ENCODE measurements at regions of chr12 and their contacts with region 1.

Region 1: GRCh38 chr12:49740930-49741881 is at the start of gene TMBIM6:
- DNase-seq: peak; percentile 100
- ATAC-seq: peak; percentile 95
- H3K4me3 ChIP-seq: peak within 1 kb of the TSS; percentile 64 to 94 (median 79)
- H3K27ac ChIP-seq: peak within 1 kb of the TSS; percentile 95
- H3K4me1 ChIP-seq: peaks cover 43% of the 10 kb centered on the region
- H3K27me3 ChIP-seq: no peaks in the 10 kb centered on the region; a peak in 1 of 5 replicates
- CTCF ChIP-seq: peak; percentile 96
- EP300 ChIP-seq: peak in 1 of 2 experiments; percentile 62; a peak in 1 of 4 replicates
- POLR2A ChIP-seq: peak; percentile 99 to 100
- RAD21 ChIP-seq: peak; percentile 74
- total RNA-seq, gene TMBIM6: 220 and 412 TPM in 2 replicates

Region 2: DNA sequence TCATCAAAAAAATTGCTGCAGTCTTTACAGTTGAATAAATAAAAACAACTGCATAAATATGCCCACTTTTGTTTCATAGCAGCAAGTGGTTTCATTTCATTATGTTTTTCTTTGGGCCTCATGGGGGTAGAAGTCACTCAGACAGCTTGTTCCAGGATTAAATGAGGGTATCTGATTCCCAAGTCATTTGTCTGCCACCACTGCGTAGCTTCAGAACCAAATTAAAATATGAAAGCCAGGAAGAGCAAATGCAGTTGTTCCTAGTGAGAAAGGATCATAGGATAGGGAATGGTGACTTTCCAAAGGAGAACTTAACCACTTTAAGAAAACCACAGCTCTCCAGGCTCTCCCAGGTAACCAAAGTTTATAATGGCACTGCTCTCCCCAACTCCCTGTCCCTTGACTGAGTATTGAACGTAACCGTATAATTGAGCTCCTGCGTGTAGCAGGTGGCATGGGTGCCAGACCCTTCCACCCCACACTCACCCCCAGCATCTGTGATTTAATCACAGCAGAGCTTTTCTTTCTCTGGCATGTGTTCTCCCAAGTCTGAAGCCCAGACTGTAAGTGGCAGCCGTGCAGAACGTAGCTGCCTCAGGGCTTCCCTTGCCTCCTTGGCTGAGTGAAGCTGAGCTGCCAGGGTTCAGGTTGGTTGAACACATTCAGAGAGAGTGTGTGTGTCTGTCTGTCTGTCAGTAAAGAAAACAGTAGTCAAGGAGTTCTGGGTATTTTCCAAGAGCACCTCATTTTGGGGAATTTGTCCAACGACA is 213.7 kb before region 1 on chr12:
- CTCF ChIA-PET with region 1: no interaction called
- POLR2A ChIA-PET with region 1: no interaction called
- in situ Hi-C with region 1: no loop called
- intact Hi-C with region 1: no loop called
- DNase-seq: no peak
- ATAC-seq: no peak
- H3K4me3 ChIP-seq: no peak overlapping the region
- H3K27ac ChIP-seq: no peak overlapping the region
- H3K4me1 ChIP-seq: no peaks in the 10 kb centered on the region
- H3K27me3 ChIP-seq: no peaks in the 10 kb centered on the region
- CTCF ChIP-seq: no peak
- EP300 ChIP-seq: no peak
- POLR2A ChIP-seq: no peak
- RAD21 ChIP-seq: no peak

Region 3: DNA sequence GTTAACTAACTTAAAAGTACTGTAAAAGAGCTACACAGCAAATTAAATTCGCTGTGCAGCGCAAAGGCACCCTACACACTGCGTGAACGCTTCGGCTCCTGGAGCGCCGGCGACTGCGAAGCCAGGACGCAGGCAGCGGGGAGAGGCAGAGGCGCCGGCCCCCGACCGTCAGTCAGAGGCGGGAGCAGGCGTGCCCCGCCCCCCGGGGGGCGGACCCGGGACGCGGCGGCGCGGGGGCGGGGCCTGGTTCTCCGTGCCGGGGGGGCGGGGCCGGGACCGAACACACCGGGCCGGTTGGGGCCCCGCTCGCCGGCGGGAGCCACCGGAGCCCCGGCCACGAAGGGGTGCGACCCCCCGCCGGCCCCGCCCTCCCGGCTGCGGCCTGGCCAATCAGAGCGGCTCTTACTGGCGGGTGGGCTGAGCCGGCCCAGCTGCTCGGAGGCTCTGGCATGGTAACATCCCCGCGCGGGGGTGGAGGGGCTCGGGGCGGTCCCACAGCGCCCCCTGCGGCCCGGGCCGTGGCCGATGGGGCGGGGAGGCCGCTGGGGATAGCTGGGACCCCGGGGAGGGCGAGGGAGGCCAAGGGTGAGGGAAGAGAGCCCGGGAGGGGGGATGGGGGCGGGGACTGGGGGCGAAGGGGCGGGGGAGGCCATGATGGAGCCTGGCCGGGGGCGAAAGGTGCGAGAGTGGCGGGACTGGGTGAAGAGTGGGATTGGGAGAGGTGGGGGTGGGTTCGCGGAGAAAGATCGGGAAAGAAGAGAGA is 117.9 kb before region 1 on chr12 and contains the start of gene PRPF40B:
- CTCF ChIA-PET with region 1: no interaction called
- POLR2A ChIA-PET with region 1: interaction called, 10 read pairs
- in situ Hi-C with region 1: no loop called
- intact Hi-C with region 1: no loop called
- DNase-seq: peak; percentile 77
- ATAC-seq: peak; percentile 90
- H3K4me3 ChIP-seq: peak within 1 kb of the TSS; percentile 56 to 75 (median 59)
- H3K27ac ChIP-seq: peak within 1 kb of the TSS; percentile 67
- H3K4me1 ChIP-seq: peaks cover 29% of the 10 kb centered on the region
- H3K27me3 ChIP-seq: no peaks in the 10 kb centered on the region
- CTCF ChIP-seq: peak; percentile 78
- EP300 ChIP-seq: no peak
- POLR2A ChIP-seq: peak; percentile 90 to 92
- RAD21 ChIP-seq: no peak
- total RNA-seq, gene PRPF40B: 2.6 and 5.0 TPM in 2 replicates

Region 4: GRCh38 chr12:49673446-49674317 is 67.5 kb before region 1 on chr12:
- CTCF ChIA-PET with region 1: no interaction called
- POLR2A ChIA-PET with region 1: interaction called, 15 read pairs
- in situ Hi-C with region 1: no loop called
- intact Hi-C with region 1: no loop called
- DNase-seq: peak; percentile 47
- ATAC-seq: peak; percentile 97
- H3K4me3 ChIP-seq: peak overlapping the region; percentile 24 to 53 (median 31); a peak in 4 of 6 replicates
- H3K27ac ChIP-seq: no peak overlapping the region
- H3K4me1 ChIP-seq: peaks cover 24% of the 10 kb centered on the region
- H3K27me3 ChIP-seq: no peaks in the 10 kb centered on the region; a peak in 1 of 5 replicates
- CTCF ChIP-seq: no peak
- EP300 ChIP-seq: no peak
- POLR2A ChIP-seq: no peak
- RAD21 ChIP-seq: no peak

Region 5: GRCh38 chr12:49720214-49720613 is 21.0 kb before region 1 on chr12:
- CTCF ChIA-PET with region 1: no interaction called
- POLR2A ChIA-PET with region 1: interaction called, 10 read pairs
- in situ Hi-C with region 1: no loop called
- intact Hi-C with region 1: no loop called
- DNase-seq: peak; percentile 52
- ATAC-seq: peak; percentile 68
- H3K4me3 ChIP-seq: no peak overlapping the region
- H3K27ac ChIP-seq: no peak overlapping the region
- H3K4me1 ChIP-seq: peaks cover 10% of the 10 kb centered on the region; the same call in 1 of the 2 replicates
- H3K27me3 ChIP-seq: no peaks in the 10 kb centered on the region; a peak in 1 of 5 replicates
- CTCF ChIP-seq: peak; percentile 17; the same call in 1 of the 2 replicates
- EP300 ChIP-seq: no peak
- POLR2A ChIP-seq: no peak
- RAD21 ChIP-seq: no peak

Region 6: DNA sequence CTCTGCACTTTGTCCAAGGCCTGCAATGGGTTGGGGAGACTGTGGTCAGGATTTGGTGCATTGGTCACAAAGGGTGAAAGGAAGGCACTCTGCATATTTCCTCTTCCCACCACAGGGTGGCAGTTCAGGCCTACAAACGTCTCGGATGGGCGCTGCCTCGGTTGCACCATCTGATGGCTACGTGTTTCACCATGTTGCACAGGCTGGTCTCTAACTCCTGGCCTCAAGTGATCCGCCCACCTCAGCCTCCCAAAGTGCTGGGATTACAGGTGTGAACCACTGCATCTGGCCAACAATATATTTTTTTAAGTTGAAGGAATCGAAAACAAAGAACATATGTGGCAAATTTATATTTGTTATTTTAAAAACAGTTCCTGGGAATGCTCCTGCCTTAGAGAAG is 35.2 kb after region 1 on chr12:
- CTCF ChIA-PET with region 1: interaction called, 16 read pairs
- POLR2A ChIA-PET with region 1: interaction called, 12 read pairs
- in situ Hi-C with region 1: no loop called
- intact Hi-C with region 1: no loop called
- DNase-seq: peak; percentile 66
- ATAC-seq: peak; percentile 91
- H3K4me3 ChIP-seq: no peak overlapping the region
- H3K27ac ChIP-seq: no peak overlapping the region
- H3K4me1 ChIP-seq: peaks cover 16% of the 10 kb centered on the region
- H3K27me3 ChIP-seq: peaks cover 0 to 4% of the 10 kb centered on the region in 2 experiments; a peak in 1 of 5 replicates
- CTCF ChIP-seq: peak; percentile 94
- EP300 ChIP-seq: no peak
- POLR2A ChIP-seq: no peak
- RAD21 ChIP-seq: peak; percentile 86

Region 7: DNA sequence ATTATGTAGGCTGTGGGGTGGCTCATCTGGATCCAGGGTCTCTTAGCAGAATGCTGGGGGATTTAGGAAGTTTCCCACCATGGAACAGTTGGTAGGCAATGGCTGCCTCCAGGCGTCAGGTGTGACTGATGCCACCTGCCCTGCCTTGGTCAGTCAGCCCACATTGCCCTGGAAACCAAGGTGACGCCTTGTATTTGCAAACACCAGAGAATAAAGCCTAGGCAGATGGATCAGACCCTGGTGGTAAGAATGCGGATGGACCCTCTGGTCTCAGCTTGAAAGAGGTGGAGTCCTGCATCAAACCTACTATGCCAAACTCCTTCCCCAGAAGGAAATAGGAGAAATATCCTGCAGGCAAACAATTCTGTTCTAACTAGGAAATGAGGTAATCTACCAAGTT is 48.8 kb after region 1 on chr12:
- CTCF ChIA-PET with region 1: no interaction called
- POLR2A ChIA-PET with region 1: no interaction called
- in situ Hi-C with region 1: no loop called
- intact Hi-C with region 1: no loop called
- DNase-seq: peak; percentile 37
- ATAC-seq: peak; percentile 40
- H3K4me3 ChIP-seq: no peak overlapping the region
- H3K27ac ChIP-seq: no peak overlapping the region
- H3K4me1 ChIP-seq: no peaks in the 10 kb centered on the region
- H3K27me3 ChIP-seq: no peaks in the 10 kb centered on the region
- CTCF ChIP-seq: no peak
- EP300 ChIP-seq: no peak
- POLR2A ChIP-seq: no peak
- RAD21 ChIP-seq: no peak

Region 8: GRCh38 chr12:49842519-49843352 is 101.5 kb after region 1 on chr12 and contains the start of gene BCDIN3D:
- CTCF ChIA-PET with region 1: no interaction called
- POLR2A ChIA-PET with region 1: interaction called, 10 read pairs
- in situ Hi-C with region 1: no loop called
- intact Hi-C with region 1: no loop called
- DNase-seq: peak; percentile 83
- ATAC-seq: peak; percentile 97
- H3K4me3 ChIP-seq: peak within 1 kb of the TSS; percentile 94 to 99 (median 97)
- H3K27ac ChIP-seq: peak within 1 kb of the TSS; percentile 92
- H3K4me1 ChIP-seq: peaks cover 19% of the 10 kb centered on the region
- H3K27me3 ChIP-seq: peaks cover 0 to 3% of the 10 kb centered on the region in 2 experiments; a peak in 1 of 5 replicates
- CTCF ChIP-seq: no peak
- EP300 ChIP-seq: no peak
- POLR2A ChIP-seq: peak; percentile 75 to 83
- RAD21 ChIP-seq: no peak
- total RNA-seq, gene BCDIN3D: 1.8 and 2.5 TPM in 2 replicates